Activated CD4-positive, alpha-beta T cell treated with anti-CD3 and anti-CD28 coated beads for 36 hours (primary cell): ENCODE measurements at regions of chr11 and their contacts with region 1.

Region 1: DNA sequence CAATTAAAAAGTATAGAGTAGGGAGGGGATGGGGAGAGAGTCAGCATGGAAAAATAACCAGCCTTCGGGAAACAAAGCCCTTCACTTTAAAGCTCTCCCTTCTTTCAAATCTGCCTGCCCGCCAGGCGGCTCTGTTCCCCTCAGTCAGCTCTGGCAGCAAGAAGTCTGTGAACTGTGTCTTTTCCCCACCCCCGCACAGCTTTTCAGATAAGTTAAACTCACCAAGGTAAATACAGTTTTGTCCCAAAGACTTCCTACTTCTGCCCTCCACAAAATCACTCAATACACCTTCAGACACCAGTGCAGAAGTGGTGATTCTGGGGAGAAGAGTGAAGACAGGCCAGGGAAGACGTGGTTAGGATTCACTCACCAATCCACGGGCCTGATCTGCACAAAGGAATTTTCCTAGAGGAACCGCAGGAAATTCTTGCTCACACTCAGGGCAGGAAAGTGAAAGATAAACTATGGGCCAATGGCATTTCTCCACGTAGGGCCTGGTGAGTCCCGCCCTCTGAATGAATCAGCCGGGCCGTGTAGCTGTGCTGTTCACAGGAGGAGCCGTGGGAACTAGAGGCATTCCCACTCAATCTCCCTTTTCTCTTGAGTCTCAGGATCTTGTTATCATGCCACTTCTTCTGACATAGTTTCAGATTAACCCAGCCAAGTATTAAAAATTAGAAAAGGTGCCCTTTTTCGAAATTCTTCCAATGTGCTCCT is at the start of gene TRIM5:
- DNase-seq: peak; percentile 90
- ATAC-seq: peak; percentile 84
- H3K4me3 Mint-ChIP-seq: peak within 1 kb of the TSS; percentile 84
- H3K27ac Mint-ChIP-seq: peak within 1 kb of the TSS; percentile 93
- H3K4me1 Mint-ChIP-seq: peaks cover 43% of the 10 kb centered on the region
- H3K27me3 Mint-ChIP-seq: no peaks in the 10 kb centered on the region
- total RNA-seq, gene TRIM5: 16.4 to 17.9 TPM

Region 2: DNA sequence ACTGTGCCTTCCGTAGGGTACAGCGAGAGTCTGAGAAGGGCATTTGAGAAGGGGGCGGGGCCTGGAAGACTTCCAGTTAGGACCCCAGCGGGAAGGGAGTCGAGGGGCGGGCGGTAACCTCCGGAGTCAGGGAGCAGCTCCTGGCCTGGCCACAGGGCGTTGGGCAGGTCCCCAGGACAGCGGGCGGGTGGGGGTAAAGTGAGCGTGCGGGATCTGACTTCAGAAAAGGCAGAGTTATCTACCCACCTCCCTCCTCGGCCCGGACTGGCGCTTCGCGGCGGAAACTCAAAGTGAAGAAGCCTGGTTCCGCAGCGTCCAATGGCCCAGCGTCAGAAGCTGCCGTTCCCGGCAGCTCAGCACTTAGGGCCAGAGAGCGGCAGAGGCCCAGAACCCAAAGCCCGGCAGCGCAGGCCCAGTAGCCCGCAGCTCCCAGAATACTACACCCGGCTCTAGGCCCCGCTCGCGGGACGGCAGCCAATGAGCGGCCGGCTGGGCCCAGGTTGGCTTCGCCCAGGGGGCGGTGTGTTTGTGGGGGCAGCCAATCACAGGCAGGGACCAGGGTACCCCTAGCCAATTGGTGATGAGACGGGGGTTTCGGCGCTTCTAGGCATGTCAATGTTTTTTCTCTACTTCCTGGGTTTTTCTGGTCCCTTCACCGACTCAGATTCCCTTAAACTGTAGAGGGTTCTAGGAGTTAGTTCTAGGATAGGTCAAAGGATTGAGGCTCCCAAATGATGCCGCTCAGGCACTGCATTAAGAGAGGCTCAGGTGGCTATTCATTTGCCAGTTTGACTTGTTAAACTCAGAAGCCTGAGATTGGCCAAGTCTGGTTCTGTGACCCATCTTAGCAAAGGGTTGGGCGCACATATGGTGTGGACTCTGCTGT is 1076.8 kb before region 1 on chr11 and contains the start of gene TRIM68:
- CTCF ChIA-PET with region 1: no interaction called
- POLR2A ChIA-PET with region 1: no interaction called
- intact Hi-C with region 1: loop called in 1 of 2 experiments (anchors 2 kb)
- DNase-seq: peak; percentile 97
- ATAC-seq: peak; percentile 100
- H3K4me3 Mint-ChIP-seq: peak within 1 kb of the TSS; percentile 90
- H3K27ac Mint-ChIP-seq: peak within 1 kb of the TSS; percentile 90
- H3K4me1 Mint-ChIP-seq: peaks cover 35% of the 10 kb centered on the region
- H3K27me3 Mint-ChIP-seq: no peaks in the 10 kb centered on the region
- total RNA-seq, gene TRIM68: 8.9 to 9.2 TPM

Region 3: DNA sequence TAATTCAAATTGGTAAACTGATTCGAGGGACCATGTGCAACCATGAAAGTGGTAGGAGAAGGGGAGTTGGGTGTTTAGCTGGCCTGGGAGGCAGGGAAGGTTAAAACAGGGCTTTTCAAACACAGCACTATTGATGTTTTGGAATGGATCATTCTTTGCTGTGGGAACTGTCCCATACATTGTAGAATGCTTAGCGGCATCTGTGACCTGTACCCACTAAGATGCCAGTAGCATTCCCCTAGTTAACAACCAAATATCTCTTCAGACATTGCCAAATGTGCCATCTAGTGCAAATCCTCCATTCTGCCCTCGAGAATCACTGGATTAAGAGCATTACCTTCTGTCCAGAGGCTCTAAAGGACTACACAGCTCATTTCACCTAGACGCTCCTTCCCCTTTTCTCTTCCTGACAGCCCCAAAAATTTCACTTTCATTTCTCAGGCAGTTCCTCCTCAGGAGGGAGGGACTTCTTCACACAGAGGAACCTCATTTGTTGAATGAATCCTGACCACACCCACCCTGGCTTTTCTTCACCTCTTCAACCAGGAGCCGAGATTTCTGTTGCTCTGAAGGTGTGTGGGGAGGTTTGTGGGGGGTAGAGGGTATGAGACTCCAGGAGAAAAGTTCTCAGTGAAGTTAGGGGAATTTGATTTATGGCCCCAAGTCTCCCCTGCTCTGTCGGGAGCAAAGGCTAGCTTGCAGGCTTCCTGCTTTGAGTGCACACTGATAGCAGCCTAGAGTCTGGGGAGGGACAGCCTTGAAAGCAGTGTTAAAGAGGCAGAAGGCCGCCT is 60.1 kb before region 1 on chr11 and contains the start of gene TRIM34:
- CTCF ChIA-PET with region 1: interaction called, 4 read pairs
- POLR2A ChIA-PET with region 1: interaction called, 3 read pairs
- intact Hi-C with region 1: loop called (anchors 1 to 2 kb)
- DNase-seq: peak; percentile 72
- ATAC-seq: peak; percentile 95
- H3K4me3 Mint-ChIP-seq: peak within 1 kb of the TSS; percentile 87
- H3K27ac Mint-ChIP-seq: peak within 1 kb of the TSS; percentile 95
- H3K4me1 Mint-ChIP-seq: peaks cover 35% of the 10 kb centered on the region
- H3K27me3 Mint-ChIP-seq: no peaks in the 10 kb centered on the region
- total RNA-seq, gene TRIM34: 10.4 to 11.8 TPM

Region 4: GRCh38 chr11:5703741-5704536 is 19.1 kb after region 1 on chr11:
- CTCF ChIA-PET with region 1: interaction called, 10 read pairs
- POLR2A ChIA-PET with region 1: no interaction called
- intact Hi-C with region 1: loop called in 1 of 2 experiments (anchors 2 kb)
- DNase-seq: no peak
- ATAC-seq: no peak
- H3K4me3 Mint-ChIP-seq: no peak overlapping the region
- H3K27ac Mint-ChIP-seq: no peak overlapping the region
- H3K4me1 Mint-ChIP-seq: peaks cover 42% of the 10 kb centered on the region
- H3K27me3 Mint-ChIP-seq: no peaks in the 10 kb centered on the region

Region 5: DNA sequence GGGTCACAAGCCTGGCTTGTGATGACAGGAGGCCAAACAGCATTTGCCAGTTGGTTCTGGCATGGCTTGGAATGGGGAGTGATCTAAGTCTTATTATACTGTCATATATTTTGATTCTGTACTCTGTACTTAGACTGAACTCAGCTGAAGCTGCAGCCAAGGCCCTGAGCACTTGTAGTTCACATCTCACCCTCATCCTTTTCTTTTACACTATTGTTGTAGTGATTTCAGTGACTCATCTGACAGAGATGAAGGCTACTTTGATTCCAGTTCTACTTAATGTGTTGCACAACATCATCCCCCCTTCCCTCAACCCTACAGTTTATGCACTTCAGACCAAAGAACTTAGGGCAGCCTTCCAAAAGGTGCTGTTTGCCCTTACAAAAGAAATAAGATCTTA is 52.3 kb after region 1 on chr11:
- CTCF ChIA-PET with region 1: no interaction called
- POLR2A ChIA-PET with region 1: no interaction called
- intact Hi-C with region 1: no loop called
- DNase-seq: no peak
- ATAC-seq: no peak
- H3K4me3 Mint-ChIP-seq: no peak overlapping the region
- H3K27ac Mint-ChIP-seq: no peak overlapping the region
- H3K4me1 Mint-ChIP-seq: no peaks in the 10 kb centered on the region
- H3K27me3 Mint-ChIP-seq: no peaks in the 10 kb centered on the region

Region 6: DNA sequence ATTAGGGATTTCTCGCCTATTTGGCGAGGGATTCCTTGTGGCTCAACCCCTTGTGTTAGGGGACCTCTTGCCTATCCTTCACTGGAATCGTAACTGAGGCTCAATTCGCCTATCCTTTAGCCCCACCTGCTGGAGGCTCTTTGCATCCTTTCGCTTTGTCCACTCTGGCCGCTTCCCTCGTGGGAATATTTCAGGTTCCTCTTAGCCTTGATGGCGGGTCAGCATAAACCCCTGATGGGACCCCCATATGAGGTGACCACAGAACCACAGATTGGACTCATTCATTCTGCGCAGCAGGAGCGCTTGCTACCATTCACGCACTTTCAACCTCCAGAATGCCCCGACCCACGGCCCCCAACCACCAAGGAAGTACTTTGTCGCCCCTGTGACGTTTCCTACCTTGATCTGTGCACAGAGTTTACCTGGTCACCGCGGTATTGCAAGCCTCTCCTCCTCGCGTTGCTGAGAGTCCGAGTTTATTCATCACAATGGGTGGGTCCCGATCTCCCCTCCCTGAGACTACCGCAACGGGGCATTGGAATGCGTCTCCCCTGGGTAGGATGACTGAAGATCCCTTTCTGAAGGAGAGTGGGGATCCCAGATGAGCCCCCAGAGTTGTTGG is 123.8 kb after region 1 on chr11 and contains the start of gene OR52N2:
- CTCF ChIA-PET with region 1: interaction called, 7 read pairs
- POLR2A ChIA-PET with region 1: no interaction called
- intact Hi-C with region 1: loop called (anchors 1 kb)
- DNase-seq: peak; percentile 82
- ATAC-seq: peak; percentile 92
- H3K4me3 Mint-ChIP-seq: peak within 1 kb of the TSS; percentile 79
- H3K27ac Mint-ChIP-seq: peak within 1 kb of the TSS; percentile 23
- H3K4me1 Mint-ChIP-seq: peaks cover 8% of the 10 kb centered on the region
- H3K27me3 Mint-ChIP-seq: peaks cover 16% of the 10 kb centered on the region
- total RNA-seq, gene OR52N2: not detected

Region 7: DNA sequence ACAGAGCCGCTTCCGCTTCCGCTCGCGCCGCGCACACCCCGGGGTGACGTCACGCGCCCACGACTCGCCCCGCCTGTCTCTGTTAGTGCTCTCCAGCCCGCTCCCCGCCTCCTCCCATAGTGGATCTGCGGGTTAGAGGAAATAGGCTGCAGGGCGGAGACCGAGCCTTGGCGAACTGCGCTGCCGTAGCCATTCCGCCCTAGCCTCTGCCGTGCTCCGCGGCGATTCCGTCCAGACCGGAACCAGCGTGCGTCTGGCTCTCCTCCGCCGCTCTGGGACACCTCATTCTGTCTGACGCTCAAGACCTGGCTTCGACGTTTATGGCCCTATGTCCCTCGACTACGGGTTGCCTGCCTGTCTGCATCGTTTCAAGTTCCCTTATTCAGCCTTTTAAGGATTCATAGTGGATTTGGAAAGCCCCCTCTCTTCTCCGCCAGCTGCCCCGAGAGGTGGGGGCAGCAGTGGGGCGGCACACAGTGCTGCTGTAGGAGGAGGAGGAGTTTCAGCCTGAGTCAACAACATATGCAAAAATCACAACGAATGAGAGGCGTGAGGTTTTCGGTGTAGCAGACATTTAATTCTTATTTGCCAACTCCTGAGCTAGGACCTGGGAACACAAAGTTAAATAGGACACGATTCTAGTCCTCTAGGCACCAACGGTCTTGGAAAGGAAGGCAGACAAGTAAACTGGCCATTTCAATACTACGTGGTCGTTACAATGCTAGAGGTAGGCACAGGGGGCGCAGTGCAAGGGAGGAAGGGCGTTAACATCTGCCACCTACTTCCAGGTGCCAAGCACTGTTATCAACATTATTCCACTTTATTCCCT is 927.6 kb after region 1 on chr11 and contains the start of gene TAF10:
- CTCF ChIA-PET with region 1: no interaction called
- POLR2A ChIA-PET with region 1: no interaction called
- intact Hi-C with region 1: loop called in 1 of 2 experiments (anchors 10 kb)
- DNase-seq: peak; percentile 97
- ATAC-seq: peak; percentile 85
- H3K4me3 Mint-ChIP-seq: no peak within 1 kb of the TSS
- H3K27ac Mint-ChIP-seq: peak within 1 kb of the TSS; percentile 93
- H3K4me1 Mint-ChIP-seq: peaks cover 44% of the 10 kb centered on the region
- H3K27me3 Mint-ChIP-seq: no peaks in the 10 kb centered on the region
- total RNA-seq, gene TAF10: 133 to 152 TPM

Region 8: GRCh38 chr11:6737872-6738466 is 1053.2 kb after region 1 on chr11:
- CTCF ChIA-PET with region 1: no interaction called
- POLR2A ChIA-PET with region 1: no interaction called
- intact Hi-C with region 1: loop called in 1 of 2 experiments (anchors 10 kb)
- DNase-seq: peak; percentile 76
- ATAC-seq: peak; percentile 52
- H3K4me3 Mint-ChIP-seq: no peak overlapping the region
- H3K27ac Mint-ChIP-seq: peak overlapping the region; percentile 73
- H3K4me1 Mint-ChIP-seq: peaks cover 94% of the 10 kb centered on the region
- H3K27me3 Mint-ChIP-seq: no peaks in the 10 kb centered on the region

Region 9: GRCh38 chr11:7314811-7315604 is 1630.2 kb after region 1 on chr11:
- CTCF ChIA-PET with region 1: no interaction called
- POLR2A ChIA-PET with region 1: no interaction called
- intact Hi-C with region 1: no loop called
- DNase-seq: no peak
- ATAC-seq: no peak
- H3K4me3 Mint-ChIP-seq: no peak overlapping the region
- H3K27ac Mint-ChIP-seq: no peak overlapping the region
- H3K4me1 Mint-ChIP-seq: no peaks in the 10 kb centered on the region
- H3K27me3 Mint-ChIP-seq: peaks cover 10% of the 10 kb centered on the region